HEK293 (cell line): ENCODE measurements at regions of chr19 and their contacts with region 1.

Region 1: DNA sequence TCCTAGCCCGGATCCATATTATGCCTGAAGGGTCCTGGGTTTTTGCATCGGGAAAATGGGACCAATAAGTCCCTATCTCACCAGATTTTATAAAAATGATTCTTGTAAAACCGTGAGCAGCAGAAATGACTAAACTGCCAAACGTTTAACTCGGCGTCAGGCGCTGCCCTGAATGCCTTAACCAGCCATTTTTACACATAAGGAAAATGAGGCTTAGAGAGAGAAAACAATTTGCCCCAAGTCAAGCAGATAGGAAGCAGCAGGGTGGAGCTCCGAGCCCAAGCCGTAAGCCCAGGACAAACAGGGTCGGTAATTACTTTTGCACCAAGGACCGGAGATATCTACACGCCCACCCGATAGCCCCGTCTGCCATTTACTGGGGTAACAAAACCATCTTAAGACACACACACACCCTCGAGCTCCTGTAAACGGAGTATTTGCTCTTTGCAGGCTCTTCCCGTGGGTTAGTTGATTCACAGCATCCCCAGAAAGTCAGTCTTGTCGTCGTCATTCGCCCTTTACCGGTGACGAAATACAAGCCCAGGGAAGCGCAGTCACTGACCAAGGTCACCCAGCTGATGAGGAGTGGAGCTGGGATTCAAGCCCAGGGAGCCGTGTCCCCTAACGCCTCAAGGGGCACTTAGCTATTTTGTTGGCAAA is 16.0 kb upstream of the MRI1 start:
- H3K4me3 ChIP-seq: peak overlapping the region; percentile 75
- H3K27ac ChIP-seq: peak overlapping the region; percentile 25; the same call in 1 of the 2 replicates
- H3K4me1 ChIP-seq: no peaks in the 10 kb centered on the region
- CTCF ChIP-seq: no peak

Region 2: DNA sequence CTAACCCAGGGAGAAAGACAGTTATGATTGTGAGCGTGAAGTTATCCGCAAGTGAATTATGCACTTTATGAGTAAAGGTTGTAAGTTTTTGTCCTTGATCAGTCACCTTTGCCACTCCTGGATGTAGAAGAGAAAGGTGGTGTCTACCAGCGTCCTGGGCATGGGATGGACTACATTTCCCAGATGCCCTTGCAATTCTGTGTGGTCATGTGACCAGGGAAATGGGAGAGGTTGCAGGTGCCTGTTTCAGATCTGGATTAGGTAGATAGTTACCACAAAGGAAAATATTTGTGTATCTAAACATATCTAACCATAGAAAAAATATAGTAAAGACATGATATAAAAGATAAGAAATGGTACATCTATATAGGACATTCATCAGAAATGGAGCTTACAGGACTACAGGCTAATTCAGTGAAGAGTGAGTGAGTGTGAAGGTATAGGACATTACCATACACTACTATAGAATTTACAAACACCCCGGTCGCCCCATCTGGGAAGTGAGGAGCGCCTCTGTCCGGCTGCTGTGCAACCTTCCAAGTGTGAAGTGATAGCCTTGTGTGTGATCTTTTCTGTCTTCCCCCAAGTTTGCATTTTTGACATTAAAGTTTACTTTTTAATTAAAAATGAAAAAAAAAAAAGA is 190.4 kb before region 1 on chr19:
- CTCF ChIA-PET with region 1: no interaction called
- POLR2A ChIA-PET with region 1: no interaction called
- H3K4me3 ChIP-seq: no peak overlapping the region
- H3K27ac ChIP-seq: no peak overlapping the region
- H3K4me1 ChIP-seq: no peaks in the 10 kb centered on the region
- CTCF ChIP-seq: no peak

Region 3: GRCh38 chr19:13731147-13731964 is 16.9 kb before region 1 on chr19:
- CTCF ChIA-PET with region 1: interaction called, 4 read pairs
- POLR2A ChIA-PET with region 1: interaction called, 31 read pairs
- H3K4me3 ChIP-seq: peak overlapping the region; percentile 73
- H3K27ac ChIP-seq: peak overlapping the region; percentile 46
- H3K4me1 ChIP-seq: 0 out of 2 replicates have a peak, but pooled peaks cover 4% of the 10 kb centered on the region
- CTCF ChIP-seq: no peak

Region 4: DNA sequence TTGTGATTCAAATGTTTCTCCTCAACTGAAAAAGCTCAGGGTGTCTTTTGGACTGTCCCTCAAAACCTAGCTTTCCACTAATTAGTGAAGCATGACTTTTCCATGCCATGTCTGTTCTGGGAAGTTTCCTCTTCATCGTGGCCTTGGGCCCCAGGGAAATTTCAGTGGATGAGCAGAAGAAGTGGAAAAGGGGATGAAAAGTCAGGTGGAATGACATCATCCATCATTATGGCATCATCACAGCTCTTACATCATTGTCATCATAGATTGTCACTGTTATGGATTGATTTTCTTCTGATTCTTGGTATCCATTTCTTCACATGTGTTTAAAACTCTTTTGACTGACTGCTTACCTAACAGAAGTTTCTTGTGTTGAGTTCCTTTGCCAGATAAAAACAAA is 10.2 kb before region 1 on chr19:
- CTCF ChIA-PET with region 1: interaction called, 4 read pairs
- POLR2A ChIA-PET with region 1: interaction called, 31 read pairs
- H3K4me3 ChIP-seq: no peak overlapping the region
- H3K27ac ChIP-seq: no peak overlapping the region
- H3K4me1 ChIP-seq: no peaks in the 10 kb centered on the region
- CTCF ChIP-seq: no peak

Region 5: GRCh38 chr19:13764101-13764807 is 16.0 kb after region 1 on chr19 and contains the start of gene MRI1:
- CTCF ChIA-PET with region 1: no interaction called
- POLR2A ChIA-PET with region 1: interaction called, 21 read pairs
- H3K4me3 ChIP-seq: peak within 1 kb of the TSS; percentile 85
- H3K27ac ChIP-seq: peak within 1 kb of the TSS; percentile 35
- H3K4me1 ChIP-seq: no peaks in the 10 kb centered on the region
- CTCF ChIP-seq: no peak